K562 (cell line): ENCODE measurements at regions of chr1 and their contacts with region 1.

Region 1: GRCh38 chr1:32321712-32322291 is 14.2 kb downstream of the MARCKSL1 start:
- DNase-seq: no peak
- ATAC-seq: no peak; the same call in 2 of the 3 replicates
- H3K4me3 ChIP-seq: no peak overlapping the region
- H3K27ac ChIP-seq: no peak overlapping the region
- H3K4me1 ChIP-seq: no peaks in the 10 kb centered on the region
- H3K27me3 ChIP-seq: no peaks in the 10 kb centered on the region
- CTCF ChIP-seq: no peak
- EP300 ChIP-seq: no peak
- POLR2A ChIP-seq: no peak
- RAD21 ChIP-seq: no peak

Region 2: GRCh38 chr1:31872658-31873636 is 448.9 kb before region 1 on chr1:
- CTCF ChIA-PET with region 1: no interaction called
- POLR2A ChIA-PET with region 1: no interaction called
- in situ Hi-C with region 1: no loop called
- intact Hi-C with region 1: no loop called
- DNase-seq: peak in 1 of 4 experiments; percentile 47
- ATAC-seq: peak; percentile 67
- H3K4me3 ChIP-seq: no peak overlapping the region
- H3K27ac ChIP-seq: no peak overlapping the region
- H3K4me1 ChIP-seq: peaks cover 4% of the 10 kb centered on the region in 2 experiments; a peak in 4 of 5 replicates
- H3K27me3 ChIP-seq: no peaks in the 10 kb centered on the region
- CTCF ChIP-seq: no peak
- EP300 ChIP-seq: peak; percentile 16; the same call in 1 of the 2 replicates
- POLR2A ChIP-seq: no peak
- RAD21 ChIP-seq: no peak

Region 3: DNA sequence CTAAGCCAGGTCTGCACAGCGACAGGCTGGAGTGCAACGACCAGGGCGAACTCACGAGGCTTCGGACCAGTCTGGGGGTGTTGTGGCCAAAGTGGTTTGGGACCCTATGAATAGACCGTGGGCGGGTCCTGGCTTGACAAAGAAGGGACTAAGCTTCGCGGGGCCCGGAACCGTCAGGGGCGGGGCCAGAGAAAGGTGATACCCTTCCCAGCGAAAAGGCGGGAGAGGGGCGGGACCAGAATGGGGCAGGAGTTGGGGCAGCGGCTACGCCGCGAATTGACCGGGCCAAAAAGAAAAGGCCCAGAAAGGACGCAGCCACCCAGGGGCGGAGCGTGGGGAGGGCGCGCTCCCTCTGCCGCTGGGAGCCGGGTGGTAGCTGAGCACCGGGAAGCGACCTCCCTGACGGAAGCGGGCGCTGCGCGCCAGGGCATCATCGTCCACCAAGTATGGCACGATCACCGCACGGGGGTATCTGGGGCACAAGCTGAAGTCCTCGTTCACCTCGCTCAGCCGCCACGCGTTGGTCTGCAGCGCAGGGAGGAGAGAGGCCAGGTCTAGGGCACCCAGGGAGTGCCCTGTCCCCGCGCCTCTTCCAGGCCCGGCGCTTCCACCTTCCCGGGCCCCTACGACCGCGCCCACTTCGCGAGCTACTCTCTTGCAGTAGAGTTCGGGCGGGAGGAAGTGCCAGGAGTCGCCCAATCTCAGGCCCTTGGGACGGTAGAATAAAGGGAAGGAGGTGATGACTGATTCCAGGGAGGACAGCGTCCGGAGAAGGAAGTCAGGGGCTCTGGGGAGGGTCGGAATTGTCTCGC is 81.5 kb before region 1 on chr1:
- CTCF ChIA-PET with region 1: no interaction called
- POLR2A ChIA-PET with region 1: no interaction called
- in situ Hi-C with region 1: no loop called
- intact Hi-C with region 1: no loop called
- DNase-seq: no peak
- ATAC-seq: no peak
- H3K4me3 ChIP-seq: no peak overlapping the region
- H3K27ac ChIP-seq: no peak overlapping the region
- H3K4me1 ChIP-seq: peaks cover 23 to 26% of the 10 kb centered on the region in 2 experiments; a peak in 4 of 5 replicates
- H3K27me3 ChIP-seq: no peaks in the 10 kb centered on the region
- CTCF ChIP-seq: no peak
- EP300 ChIP-seq: no peak
- POLR2A ChIP-seq: no peak
- RAD21 ChIP-seq: no peak

Region 4: DNA sequence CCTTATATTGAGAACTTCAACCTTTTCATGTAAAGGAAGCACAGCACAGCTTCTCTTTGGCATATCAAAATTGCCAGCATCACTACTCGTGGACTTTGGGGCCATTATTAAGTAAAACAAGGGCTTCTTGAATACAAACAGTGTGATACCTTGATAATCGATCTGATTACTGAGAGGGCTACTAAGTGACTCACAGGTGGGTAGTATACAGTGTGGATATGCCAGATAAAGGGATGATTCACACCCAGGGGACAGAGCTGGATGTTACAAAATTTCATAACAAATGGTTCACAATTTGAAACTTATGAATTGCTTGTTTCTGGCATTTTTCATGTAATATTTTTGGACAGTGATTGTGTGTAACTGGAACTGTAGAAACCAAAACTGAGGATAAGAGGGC is 14.5 kb before region 1 on chr1:
- CTCF ChIA-PET with region 1: no interaction called
- POLR2A ChIA-PET with region 1: interaction called, 16 read pairs
- in situ Hi-C with region 1: no loop called
- intact Hi-C with region 1: no loop called
- DNase-seq: peak; percentile 40 to 63 (median 46)
- ATAC-seq: peak; percentile 25; the same call in 2 of the 3 replicates
- H3K4me3 ChIP-seq: no peak overlapping the region
- H3K27ac ChIP-seq: peak overlapping the region; percentile 26; the same call in 2 of the 3 replicates
- H3K4me1 ChIP-seq: peaks cover 35 to 47% of the 10 kb centered on the region in 2 experiments
- H3K27me3 ChIP-seq: no peaks in the 10 kb centered on the region
- CTCF ChIP-seq: no peak
- EP300 ChIP-seq: peak; percentile 81
- POLR2A ChIP-seq: no peak
- RAD21 ChIP-seq: no peak